Spleen (tissue), 13 donors: ENCODE measurements at regions of chr6 and their contacts with region 1.

Region 1: DNA sequence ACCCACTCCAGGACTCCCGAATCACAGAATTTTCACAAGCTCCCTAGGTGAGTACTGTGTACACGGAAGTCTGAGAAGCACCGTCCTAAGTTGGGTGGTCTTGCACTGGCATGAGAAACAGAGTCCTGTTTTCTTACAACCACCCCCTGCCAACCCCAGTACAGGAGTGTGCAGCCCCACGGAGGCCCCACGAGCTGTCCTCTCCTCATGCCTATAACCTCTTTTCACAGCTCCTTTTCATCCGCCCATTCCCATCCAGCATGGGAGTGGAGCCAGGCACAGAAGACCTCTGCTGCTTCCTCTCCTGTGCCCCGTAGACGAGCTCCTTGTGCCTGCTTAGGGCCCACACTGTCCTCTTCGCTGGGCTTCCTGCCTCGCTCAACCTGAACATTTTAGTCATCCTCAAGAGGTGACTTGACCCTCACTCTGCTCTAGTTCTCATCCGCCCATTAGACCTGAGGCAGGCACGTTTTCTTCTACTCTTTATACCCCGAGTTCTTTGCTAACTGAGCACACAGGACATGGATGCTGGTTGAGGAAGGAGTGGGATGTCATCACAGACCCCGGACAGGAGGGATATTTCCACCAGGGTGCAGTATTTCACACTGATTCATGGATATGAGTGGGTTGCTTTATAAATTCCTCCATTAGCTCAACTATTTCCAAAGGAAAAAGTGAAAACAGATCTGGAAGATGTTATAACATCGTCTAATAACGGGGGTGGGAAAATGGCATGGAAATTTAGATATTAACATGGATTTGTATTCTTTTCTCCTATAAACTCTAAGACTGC is 160.5 kb downstream of the TTLL2 start:
- DNase-seq: no peak
- H3K4me3 ChIP-seq: no peak overlapping the region
- H3K27ac ChIP-seq: no peak overlapping the region
- H3K4me1 ChIP-seq: peaks cover 0 to 3% (median 1%) of the 10 kb centered on the region in 6 donors
- H3K27me3 ChIP-seq: no peaks in the 10 kb centered on the region
- CTCF ChIP-seq: peak in 9 of 11 experiments; percentile 21 to 68 (median 53)
- POLR2A ChIP-seq: no peak

Region 2: DNA sequence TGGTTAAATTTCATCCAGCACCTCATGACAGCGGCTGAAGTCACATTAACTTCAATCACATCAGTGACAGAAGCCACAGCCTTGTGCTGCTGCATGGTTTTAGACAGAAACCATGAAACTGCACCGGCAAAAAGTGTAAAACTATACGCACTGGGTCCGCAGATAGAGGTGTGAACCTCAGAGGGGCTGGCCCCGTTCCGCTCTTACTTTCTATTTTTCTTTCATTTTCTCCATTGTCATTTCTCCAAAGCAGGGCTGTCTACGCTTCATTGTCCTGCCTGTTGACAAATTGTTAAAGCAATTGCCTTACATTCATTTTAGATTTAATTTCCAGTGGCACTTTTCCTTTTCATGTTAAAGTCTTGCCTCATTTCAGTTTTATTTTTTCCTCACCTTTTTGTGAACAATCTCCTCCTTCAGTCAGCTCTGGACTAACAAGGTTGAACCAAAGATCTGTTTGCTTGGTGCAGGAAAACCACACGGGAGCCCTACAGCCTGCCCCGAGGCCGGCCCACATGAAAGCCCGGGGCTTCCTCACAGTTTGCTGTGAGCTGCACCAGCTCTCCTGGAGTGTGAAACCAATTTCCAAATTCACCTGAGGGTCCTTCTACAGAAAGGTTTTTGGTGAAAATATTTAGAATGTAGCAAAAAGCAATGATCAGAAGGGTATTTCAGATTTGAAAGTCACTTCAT is 1240.9 kb before region 1 on chr6:
- intact Hi-C with region 1: no loop called
- DNase-seq: no peak
- H3K4me3 ChIP-seq: peak overlapping the region in 5 of 8 donors; percentile 11 to 54 (median 13)
- H3K27ac ChIP-seq: peak overlapping the region in 4 of 8 donors; percentile 35 to 62 (median 50)
- H3K4me1 ChIP-seq: peaks cover 0 to 24% (median 20%) of the 10 kb centered on the region in 6 donors
- H3K27me3 ChIP-seq: peaks cover 0 to 5% (median 0%) of the 10 kb centered on the region in 7 donors
- CTCF ChIP-seq: no peak
- POLR2A ChIP-seq: no peak

Region 3: DNA sequence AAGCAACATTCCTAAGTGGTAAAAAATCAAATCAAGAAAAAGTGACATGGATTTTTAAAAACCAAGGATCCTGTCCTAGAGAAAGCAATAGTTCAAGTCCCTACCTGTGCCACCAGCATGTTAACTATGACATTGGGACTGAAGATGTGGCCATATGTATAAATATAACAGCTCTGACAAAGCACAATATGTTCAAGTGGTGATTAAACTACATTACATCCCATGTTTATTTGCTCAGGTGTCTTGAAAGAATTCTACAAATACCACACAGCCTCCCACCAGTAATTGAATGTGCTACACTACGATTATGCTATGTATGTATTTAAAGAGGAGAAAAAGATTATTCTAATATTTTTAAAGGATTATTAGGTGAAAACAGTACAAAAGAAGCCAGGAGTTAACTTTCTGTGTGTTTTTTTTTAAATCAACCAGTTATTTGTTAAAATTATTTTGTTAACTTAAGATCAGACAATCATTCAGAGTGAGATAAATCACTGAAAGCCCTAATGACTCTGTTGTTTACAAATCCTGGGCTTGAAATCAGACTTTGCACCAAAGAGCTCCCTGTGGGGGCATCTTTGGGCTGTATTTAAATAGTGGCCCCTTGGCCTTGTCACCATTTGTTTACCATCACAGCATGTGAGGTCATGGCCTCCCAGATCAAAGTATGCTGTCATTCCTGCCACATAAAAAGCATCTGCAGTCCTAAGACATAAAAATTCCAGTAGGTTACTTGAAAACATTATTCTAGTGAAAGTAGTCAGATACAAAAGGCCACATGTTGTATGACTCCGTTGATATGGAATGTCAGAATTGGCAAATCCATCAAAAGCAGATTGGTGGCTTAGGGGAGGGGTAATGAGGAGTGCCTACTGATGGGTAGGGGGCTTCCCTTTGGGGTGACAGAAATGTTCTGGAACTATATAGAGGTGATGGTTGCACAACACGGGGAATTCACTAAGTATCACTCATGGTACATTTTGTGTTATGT is 143.4 kb before region 1 on chr6:
- intact Hi-C with region 1: no loop called
- DNase-seq: no peak
- H3K4me3 ChIP-seq: no peak overlapping the region
- H3K27ac ChIP-seq: no peak overlapping the region
- H3K4me1 ChIP-seq: no peaks in the 10 kb centered on the region
- H3K27me3 ChIP-seq: peaks cover 0 to 15% (median 0%) of the 10 kb centered on the region in 7 donors
- CTCF ChIP-seq: no peak
- POLR2A ChIP-seq: no peak

Region 4: DNA sequence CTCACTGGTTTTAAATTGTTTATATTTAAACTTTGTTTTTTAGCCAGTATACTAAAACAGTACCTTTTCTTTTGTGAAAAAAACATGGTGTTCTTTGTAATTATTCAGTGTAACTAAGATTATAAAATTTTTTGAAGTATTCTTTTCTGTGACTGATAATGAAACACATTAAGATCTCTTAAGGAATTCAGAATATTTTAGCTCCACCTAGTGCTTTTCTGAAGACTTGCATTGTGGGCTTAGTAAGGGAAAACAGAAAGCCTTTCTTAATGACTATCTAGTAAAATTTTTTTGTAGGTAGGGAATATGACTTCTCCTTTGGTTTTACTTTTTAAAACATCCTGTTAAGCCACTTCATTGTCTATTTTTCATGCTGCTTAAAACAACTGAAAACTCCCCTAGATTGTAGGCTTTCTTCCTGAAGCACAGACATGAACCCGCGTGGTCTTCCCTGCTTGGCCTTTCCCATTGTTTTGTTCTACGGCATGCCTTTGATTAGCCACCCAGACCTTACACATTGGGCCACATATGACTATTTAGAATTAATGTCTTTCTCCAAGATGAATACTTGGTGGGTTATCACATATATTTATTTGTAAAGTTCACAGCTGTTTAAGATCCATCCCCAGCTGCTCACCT is 413.4 kb after region 1 on chr6:
- intact Hi-C with region 1: loop called (anchors 10 kb)
- DNase-seq: no peak
- H3K4me3 ChIP-seq: no peak overlapping the region
- H3K27ac ChIP-seq: no peak overlapping the region
- H3K4me1 ChIP-seq: no peaks in the 10 kb centered on the region
- H3K27me3 ChIP-seq: no peaks in the 10 kb centered on the region
- CTCF ChIP-seq: peak; percentile 43 to 83 (median 73)
- POLR2A ChIP-seq: no peak